IMR-90 (cell line): ENCODE measurements at regions of chr1 and their contacts with region 1.

Region 1: DNA sequence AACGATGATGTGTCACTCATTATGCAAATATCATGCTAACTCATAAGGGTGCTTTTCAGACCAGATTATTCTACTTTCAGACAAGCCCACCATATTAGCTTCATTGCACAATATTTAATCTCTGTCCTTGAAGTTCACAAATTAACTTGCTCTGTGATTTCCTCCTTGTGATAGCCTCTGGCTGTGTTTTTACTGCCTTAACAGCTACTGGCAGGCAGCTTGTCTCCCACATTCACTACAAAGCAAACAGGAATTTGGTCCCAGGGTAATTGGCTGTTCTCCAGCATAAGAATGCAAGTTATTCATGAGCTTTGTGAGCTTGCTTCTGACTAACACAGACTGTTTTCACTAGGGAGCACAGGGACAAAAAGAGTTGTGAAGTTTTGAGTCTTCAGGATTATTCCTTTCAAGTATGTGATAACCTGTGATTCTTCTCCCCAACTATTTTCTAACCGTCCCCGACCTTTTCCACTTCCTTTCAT is 87.9 kb upstream of the HMCN1 start:
- DNase-seq: peak; percentile 98
- ATAC-seq: peak; percentile 84
- H3K4me3 ChIP-seq: peak overlapping the region; percentile 21; the same call in 1 of the 2 replicates
- H3K27ac ChIP-seq: peak overlapping the region; percentile 26; the same call in 1 of the 2 replicates
- H3K4me1 ChIP-seq: peaks cover 5% of the 10 kb centered on the region
- H3K27me3 ChIP-seq: no peaks in the 10 kb centered on the region
- CTCF ChIP-seq: no peak
- POLR2A ChIP-seq: no peak
- RAD21 ChIP-seq: no peak

Region 2: GRCh38 chr1:185453496-185454192 is 192.6 kb before region 1 on chr1:
- CTCF ChIA-PET with region 1: no interaction called
- POLR2A ChIA-PET with region 1: no interaction called
- dilution Hi-C with region 1: no loop called
- in situ Hi-C with region 1: no loop called
- intact Hi-C with region 1: loop called (anchors 5 kb)
- DNase-seq: peak; percentile 92
- ATAC-seq: peak; percentile 97
- H3K4me3 ChIP-seq: no peak overlapping the region
- H3K27ac ChIP-seq: peak overlapping the region; percentile 61; the same call in 1 of the 2 replicates
- H3K4me1 ChIP-seq: peaks cover 5% of the 10 kb centered on the region
- H3K27me3 ChIP-seq: peaks cover 3% of the 10 kb centered on the region; the same call in 1 of the 2 replicates
- CTCF ChIP-seq: no peak
- POLR2A ChIP-seq: no peak
- RAD21 ChIP-seq: no peak

Region 3: DNA sequence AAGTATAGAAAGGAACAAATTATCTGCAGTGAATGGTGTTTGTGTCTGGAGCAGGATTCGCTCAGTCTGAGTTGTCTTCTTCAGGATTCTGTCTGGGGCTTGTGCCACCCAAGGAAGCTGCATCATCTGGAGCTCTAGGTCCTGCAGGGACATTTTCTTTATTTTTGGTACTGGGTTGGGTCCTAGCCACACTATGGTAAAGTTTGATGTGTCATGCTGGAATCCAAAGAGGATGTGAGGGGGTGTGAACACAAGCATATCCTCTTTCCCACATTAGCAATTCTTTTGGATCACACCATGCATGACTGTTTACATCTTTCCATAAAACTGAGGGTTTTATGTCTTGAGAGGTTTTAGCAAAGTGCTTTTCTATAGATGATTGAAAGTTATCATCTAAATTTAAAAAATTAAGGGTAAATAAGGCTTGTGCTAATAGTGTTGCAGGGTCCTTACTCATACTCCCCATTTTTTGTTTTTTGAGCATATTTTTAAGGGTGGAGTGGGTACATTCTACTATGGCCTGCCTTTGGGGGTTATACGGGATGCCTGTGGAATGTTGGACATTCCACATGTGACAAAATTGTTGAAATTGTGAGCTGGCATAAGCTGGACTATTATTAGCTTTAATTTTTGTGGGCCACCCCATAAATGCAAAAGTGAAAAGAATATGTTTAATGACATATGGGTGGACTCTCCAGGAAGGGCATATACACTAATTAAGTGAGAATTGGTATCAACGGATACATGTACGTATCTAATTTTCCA is 64.1 kb before region 1 on chr1:
- CTCF ChIA-PET with region 1: no interaction called
- POLR2A ChIA-PET with region 1: no interaction called
- dilution Hi-C with region 1: no loop called
- in situ Hi-C with region 1: no loop called
- intact Hi-C with region 1: no loop called
- DNase-seq: peak; percentile 30
- ATAC-seq: no peak
- H3K4me3 ChIP-seq: no peak overlapping the region
- H3K27ac ChIP-seq: no peak overlapping the region
- H3K4me1 ChIP-seq: no peaks in the 10 kb centered on the region
- H3K27me3 ChIP-seq: no peaks in the 10 kb centered on the region
- CTCF ChIP-seq: no peak
- POLR2A ChIP-seq: no peak
- RAD21 ChIP-seq: no peak

Region 4: GRCh38 chr1:185595835-185596667 is 50.2 kb before region 1 on chr1:
- CTCF ChIA-PET with region 1: interaction called, 10 read pairs
- POLR2A ChIA-PET with region 1: no interaction called
- dilution Hi-C with region 1: no loop called
- in situ Hi-C with region 1: no loop called
- intact Hi-C with region 1: no loop called
- DNase-seq: peak; percentile 56
- ATAC-seq: peak; percentile 77
- H3K4me3 ChIP-seq: no peak overlapping the region
- H3K27ac ChIP-seq: no peak overlapping the region
- H3K4me1 ChIP-seq: no peaks in the 10 kb centered on the region
- H3K27me3 ChIP-seq: no peaks in the 10 kb centered on the region
- CTCF ChIP-seq: peak; percentile 65
- POLR2A ChIP-seq: no peak
- RAD21 ChIP-seq: peak; percentile 60